HEK293T (cell line): ENCODE measurements at regions of chr3 and their contacts with region 1.

Region 1: DNA sequence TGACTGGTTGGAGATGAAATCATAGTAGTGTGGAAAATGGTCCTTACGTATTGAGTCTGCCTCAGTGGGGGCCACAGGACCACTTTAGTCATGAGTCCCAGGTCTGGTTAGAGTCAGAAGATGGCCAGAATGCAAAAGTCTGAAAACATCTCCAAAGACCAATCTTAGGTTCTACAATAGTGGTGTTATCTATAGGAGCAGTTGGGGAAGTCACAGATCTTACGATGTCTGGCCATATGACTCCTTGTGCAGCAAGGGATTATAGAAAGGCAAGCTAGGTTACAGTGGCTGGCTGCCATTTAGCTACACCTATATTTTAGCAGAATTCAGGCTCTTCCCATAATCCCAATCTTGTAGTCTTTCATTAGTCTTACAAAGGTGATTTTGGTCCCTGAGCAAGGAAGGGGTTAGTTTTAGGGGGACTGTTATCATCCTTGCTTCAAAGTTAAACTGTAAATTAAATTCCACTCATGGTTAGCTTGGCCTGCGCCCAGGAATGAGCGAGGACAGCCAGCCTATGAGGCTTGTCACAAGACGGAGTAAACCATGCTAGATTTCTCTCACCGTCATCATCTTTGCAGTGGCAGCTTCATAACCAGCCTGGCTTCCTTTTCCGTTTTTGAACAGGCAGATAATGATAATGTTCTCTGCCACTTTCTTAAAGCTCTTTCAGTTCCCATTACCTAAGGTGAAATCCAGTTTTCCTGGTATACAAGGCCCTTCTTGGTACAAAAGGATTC is 134.1 kb downstream of the VPS8 start:
- DNase-seq: no peak

Region 2: DNA sequence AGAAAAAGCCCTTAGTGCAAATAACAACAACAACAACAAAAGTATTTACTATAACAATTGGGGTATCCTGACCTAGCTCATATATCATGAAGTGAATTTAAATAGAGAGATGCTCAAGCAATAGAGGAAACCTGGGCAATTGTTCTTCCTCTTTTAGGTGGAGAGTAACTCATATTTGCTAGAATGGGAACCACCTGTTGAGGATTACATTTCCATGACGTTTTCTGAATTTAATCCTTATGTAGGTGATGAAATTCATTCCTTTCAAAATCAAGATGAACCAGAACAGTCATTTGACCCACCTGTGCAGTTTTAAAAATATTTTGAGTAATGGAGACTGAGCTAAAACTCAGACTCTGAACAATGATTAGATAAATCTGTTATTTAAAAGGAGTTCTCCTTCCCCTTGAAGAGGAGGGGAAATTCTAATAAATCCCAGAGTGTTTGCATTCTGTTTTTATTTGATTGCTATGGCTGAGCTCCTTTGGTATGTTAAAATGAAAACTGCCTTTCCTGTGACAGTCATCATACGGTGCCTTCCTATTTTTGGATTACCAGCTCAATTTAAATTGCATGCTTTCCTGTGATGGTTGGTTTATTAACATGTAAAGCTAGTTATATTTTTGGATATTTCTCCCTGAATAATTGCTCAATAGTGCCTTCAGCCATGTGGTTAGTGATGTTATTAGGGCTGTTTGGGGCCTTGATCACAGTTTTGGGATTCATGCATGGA is 109.8 kb before region 1 on chr3:
- CTCF ChIA-PET with region 1: interaction called, 10 read pairs
- POLR2A ChIA-PET with region 1: no interaction called
- DNase-seq: no peak